Activated CD8-positive, alpha-beta T cell treated with anti-CD3 and anti-CD28 coated beads for 36 hours (primary cell): ENCODE measurements at regions of chr1 and their contacts with region 1.

Region 1: GRCh38 chr1:206834711-206835110 is 30.7 kb upstream of the IL20 start:
- DNase-seq: no peak
- ATAC-seq: no peak
- H3K4me3 Mint-ChIP-seq: no peak overlapping the region
- H3K27ac Mint-ChIP-seq: no peak overlapping the region
- H3K4me1 Mint-ChIP-seq: peaks cover 25% of the 10 kb centered on the region
- H3K27me3 Mint-ChIP-seq: peaks cover 4% of the 10 kb centered on the region
- CTCF ChIP-seq: no peak

Region 2: GRCh38 chr1:206821493-206821892 is 13.2 kb before region 1 on chr1:
- CTCF ChIA-PET with region 1: interaction called, 11 read pairs
- POLR2A ChIA-PET with region 1: interaction called, 3 read pairs
- intact Hi-C with region 1: no loop called
- DNase-seq: no peak
- ATAC-seq: no peak
- H3K4me3 Mint-ChIP-seq: no peak overlapping the region
- H3K27ac Mint-ChIP-seq: no peak overlapping the region
- H3K4me1 Mint-ChIP-seq: peaks cover 20% of the 10 kb centered on the region
- H3K27me3 Mint-ChIP-seq: no peaks in the 10 kb centered on the region
- CTCF ChIP-seq: no peak

Region 3: GRCh38 chr1:207134581-207134980 is 299.9 kb after region 1 on chr1:
- CTCF ChIA-PET with region 1: no interaction called
- POLR2A ChIA-PET with region 1: no interaction called
- intact Hi-C with region 1: no loop called
- DNase-seq: no peak
- ATAC-seq: no peak
- H3K4me3 Mint-ChIP-seq: no peak overlapping the region
- H3K27ac Mint-ChIP-seq: no peak overlapping the region
- H3K4me1 Mint-ChIP-seq: no peaks in the 10 kb centered on the region
- H3K27me3 Mint-ChIP-seq: no peaks in the 10 kb centered on the region
- CTCF ChIP-seq: no peak

Region 4: GRCh38 chr1:207218512-207219362 is 384.0 kb after region 1 on chr1:
- CTCF ChIA-PET with region 1: no interaction called
- POLR2A ChIA-PET with region 1: no interaction called
- intact Hi-C with region 1: no loop called
- DNase-seq: no peak
- ATAC-seq: no peak
- H3K4me3 Mint-ChIP-seq: no peak overlapping the region
- H3K27ac Mint-ChIP-seq: no peak overlapping the region
- H3K4me1 Mint-ChIP-seq: peaks cover 8% of the 10 kb centered on the region
- H3K27me3 Mint-ChIP-seq: no peaks in the 10 kb centered on the region
- CTCF ChIP-seq: no peak